MCF 10A (cell line): ENCODE measurements at regions of chr15 and their contacts with region 1.

Region 1: DNA sequence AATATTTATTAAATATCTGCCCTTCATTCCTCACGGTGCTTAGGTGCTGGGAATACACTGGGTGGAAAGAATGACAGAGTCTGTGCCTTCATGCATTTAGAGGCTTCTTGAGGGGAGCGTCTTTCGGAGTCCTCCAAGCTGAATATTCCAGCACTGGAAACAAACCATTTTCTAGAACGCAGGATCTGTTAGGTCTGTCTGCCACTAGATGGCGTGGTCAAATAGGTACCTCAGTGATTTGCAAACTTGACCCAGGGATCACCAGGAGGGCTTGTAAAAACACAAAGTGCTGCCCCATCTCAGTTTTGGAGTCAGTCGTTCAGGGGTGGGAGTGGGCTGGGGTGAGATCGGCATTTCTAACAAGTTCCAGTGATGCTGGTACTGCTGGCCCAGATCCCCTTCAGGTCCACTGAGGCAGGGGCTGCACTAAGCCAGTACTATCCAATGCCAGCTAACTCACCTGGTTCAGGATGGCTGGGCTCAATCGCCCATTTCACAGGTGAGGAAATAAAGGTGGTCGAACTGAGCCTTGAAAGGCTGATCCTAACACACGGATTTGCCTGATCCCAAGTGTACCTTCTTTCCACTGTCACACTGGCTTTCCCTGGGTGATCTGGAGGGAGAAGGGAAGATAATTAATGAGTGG is 14.8 kb downstream of the ARNT2 start:
- DNase-seq: peak; percentile 64
- H3K4me3 Mint-ChIP-seq: no peak overlapping the region
- H3K27ac Mint-ChIP-seq: no peak overlapping the region
- H3K4me1 Mint-ChIP-seq: peaks cover 11% of the 10 kb centered on the region
- H3K27me3 Mint-ChIP-seq: no peaks in the 10 kb centered on the region
- CTCF ChIP-seq: peak; percentile 54

Region 2: DNA sequence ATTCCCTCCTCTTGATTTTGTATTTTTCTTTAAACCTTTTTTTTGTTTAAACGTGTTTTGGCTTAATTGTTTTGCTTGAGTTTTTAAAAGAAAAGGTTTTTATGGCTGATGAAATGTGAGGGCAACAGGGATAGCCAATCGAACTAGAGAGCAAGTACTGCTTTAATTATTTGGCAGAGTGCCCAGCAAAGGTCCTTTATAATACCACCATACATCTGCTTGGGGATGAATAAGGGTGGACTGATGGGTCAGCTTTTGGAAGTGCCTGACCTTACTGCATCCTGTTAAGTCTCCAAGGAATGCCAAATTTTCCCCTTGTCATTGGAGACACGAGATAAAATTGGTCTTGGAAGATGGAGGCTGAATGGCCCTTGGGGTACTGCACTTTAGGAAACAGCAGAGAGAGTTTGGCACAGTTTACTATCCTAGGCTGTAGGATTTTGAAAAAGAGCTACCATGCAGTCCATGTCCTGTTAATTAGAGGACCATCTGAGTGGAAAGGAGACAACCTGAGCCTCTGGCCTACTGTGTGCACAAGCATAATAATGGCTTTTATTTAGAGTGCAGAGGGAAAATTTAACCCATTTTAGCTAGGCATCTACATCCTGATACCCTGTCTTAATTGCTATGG is 502.4 kb before region 1 on chr15:
- CTCF ChIA-PET with region 1: no interaction called
- POLR2A ChIA-PET with region 1: no interaction called
- intact Hi-C with region 1: no loop called
- DNase-seq: no peak
- H3K4me3 Mint-ChIP-seq: no peak overlapping the region
- H3K27ac Mint-ChIP-seq: no peak overlapping the region
- H3K4me1 Mint-ChIP-seq: no peaks in the 10 kb centered on the region
- H3K27me3 Mint-ChIP-seq: no peaks in the 10 kb centered on the region
- CTCF ChIP-seq: no peak

Region 3: GRCh38 chr15:80512726-80513660 is 94.0 kb after region 1 on chr15:
- CTCF ChIA-PET with region 1: interaction called, 5 read pairs
- POLR2A ChIA-PET with region 1: no interaction called
- intact Hi-C with region 1: loop called (anchors 1 kb)
- DNase-seq: peak; percentile 28
- H3K4me3 Mint-ChIP-seq: no peak overlapping the region
- H3K27ac Mint-ChIP-seq: no peak overlapping the region
- H3K4me1 Mint-ChIP-seq: peaks cover 9% of the 10 kb centered on the region
- H3K27me3 Mint-ChIP-seq: no peaks in the 10 kb centered on the region
- CTCF ChIP-seq: peak; percentile 29